ENCODE measurements at regions of chr4 and their contacts with region 1.

Region 1: GRCh38 chr4:120902925-120903324 is 19.6 kb downstream of the PRDM5 start:
- DNase-seq: no peak
- H3K4me3 ChIP-seq: no peak overlapping the region
- H3K27ac ChIP-seq: no peak overlapping the region
- H3K4me1 ChIP-seq: no peaks in the 10 kb centered on the region
- H3K27me3 ChIP-seq: no peaks in the 10 kb centered on the region
- CTCF ChIP-seq: no peak

Region 2: DNA sequence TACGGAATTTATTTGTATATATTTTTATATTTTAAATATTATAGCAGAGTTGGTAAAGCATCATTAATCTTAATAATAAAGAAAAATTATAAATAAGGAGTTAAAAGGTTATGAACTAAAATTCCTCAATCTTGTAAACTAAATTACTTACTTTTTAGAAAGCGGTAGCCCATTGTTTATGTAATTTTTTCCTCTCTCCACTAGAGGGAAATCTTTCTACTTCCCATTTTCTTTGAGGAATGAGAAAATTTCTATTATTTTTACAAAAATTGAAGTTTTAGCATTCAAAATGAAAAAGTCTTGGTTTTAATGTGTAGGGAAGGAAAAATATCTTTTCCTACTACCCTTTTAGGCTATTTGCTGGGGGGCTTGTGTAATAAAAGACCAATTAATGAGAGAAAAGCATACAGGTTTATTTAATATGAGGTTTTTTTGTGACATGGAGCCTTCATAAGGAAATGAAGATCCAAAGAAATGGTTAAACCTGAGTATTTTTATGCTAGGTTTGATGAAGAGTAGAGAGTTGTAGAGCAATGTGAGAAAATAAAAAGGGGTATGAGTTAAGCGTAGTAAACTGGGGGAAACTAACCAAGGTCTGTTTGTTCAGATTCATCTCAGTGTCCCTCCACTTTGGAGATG is 1407.2 kb after region 1 on chr4:
- intact Hi-C with region 1: loop called (anchors 5 kb)
- DNase-seq: no peak
- H3K4me3 ChIP-seq: no peak overlapping the region
- H3K27ac ChIP-seq: no peak overlapping the region
- H3K4me1 ChIP-seq: no peaks in the 10 kb centered on the region
- H3K27me3 ChIP-seq: no peaks in the 10 kb centered on the region
- CTCF ChIP-seq: peak in 1 of 2 experiments; percentile 26

Measured in tibial artery (tissue), 4 donors.